ENCODE measurements at regions of chr16 and their contacts with region 1.

Region 1: DNA sequence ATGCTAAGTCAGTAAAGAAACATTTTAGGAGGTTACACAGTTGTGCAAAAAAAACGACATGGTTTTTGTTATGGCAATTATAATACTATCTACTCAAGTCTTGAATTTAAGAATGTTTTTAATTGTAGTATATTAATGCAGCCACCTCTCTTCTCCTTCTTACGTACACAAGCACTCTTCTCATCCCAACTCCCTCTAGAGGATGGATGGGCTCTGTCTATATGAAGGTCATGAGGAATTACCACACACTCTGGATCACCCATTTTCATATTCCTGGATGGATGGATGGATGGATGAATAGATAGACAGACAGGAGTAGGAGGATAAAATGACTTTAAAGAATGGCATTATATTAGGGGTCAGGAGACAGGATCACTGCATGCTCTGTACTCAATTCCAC is 120.0 kb downstream of the PHKB start:
- DNase-seq: peak in 1 of 2 experiments; percentile 26
- ATAC-seq: peak; percentile 59 to 72; a peak in 3 of 6 replicates
- H3K4me3 ChIP-seq: no peak overlapping the region
- H3K27ac ChIP-seq: no peak overlapping the region
- H3K4me1 ChIP-seq: no peaks in the 10 kb centered on the region
- CTCF ChIP-seq: no peak
- EP300 ChIP-seq: no peak
- POLR2A ChIP-seq: no peak
- RAD21 ChIP-seq: no peak

Region 2: DNA sequence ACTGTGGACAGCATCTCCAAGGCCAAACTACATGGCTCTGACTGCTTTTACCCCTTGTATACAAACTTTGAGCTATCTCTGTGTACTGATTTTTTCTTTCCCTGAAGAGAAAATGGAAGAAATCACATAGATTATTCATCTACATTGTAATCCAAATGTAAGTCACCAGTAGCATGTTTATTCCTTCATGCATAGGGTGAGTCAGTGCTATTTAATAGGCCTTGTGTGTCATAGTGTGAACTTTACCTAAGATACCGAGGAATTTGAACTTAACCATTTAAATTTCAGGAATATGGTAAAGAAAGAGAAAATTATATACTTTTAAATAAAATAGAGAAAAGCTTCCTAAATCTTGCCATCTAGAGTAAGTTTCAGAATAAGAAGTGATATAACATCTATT is 103.4 kb before region 1 on chr16:
- CTCF ChIA-PET with region 1: no interaction called
- POLR2A ChIA-PET with region 1: no interaction called
- DNase-seq: no peak
- ATAC-seq: no peak
- H3K4me3 ChIP-seq: no peak overlapping the region
- H3K27ac ChIP-seq: no peak overlapping the region
- H3K4me1 ChIP-seq: 0 out of 3 replicates have a peak, but pooled peaks cover 10% of the 10 kb centered on the region
- CTCF ChIP-seq: no peak
- EP300 ChIP-seq: no peak
- POLR2A ChIP-seq: no peak
- RAD21 ChIP-seq: no peak

Region 3: DNA sequence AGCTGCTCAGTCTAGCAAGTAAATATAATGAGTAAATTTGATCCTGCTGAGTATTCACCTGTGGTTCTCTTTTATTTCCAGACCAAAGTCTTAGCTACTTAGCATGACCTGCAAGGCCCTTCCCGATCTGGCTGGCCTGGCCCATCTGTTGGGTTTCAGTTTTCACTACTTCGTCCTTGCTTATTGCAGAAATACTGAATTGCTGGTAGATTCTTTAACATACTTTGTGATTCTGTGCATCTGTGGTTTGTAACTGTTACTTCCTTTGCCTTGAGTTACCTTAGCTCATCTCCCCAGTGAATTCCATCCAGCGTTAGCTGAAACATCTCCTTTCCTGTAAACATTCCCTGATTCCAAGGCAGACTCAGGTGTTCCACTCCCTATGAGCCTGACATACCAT is 11.1 kb after region 1 on chr16:
- CTCF ChIA-PET with region 1: interaction called, 11 read pairs
- POLR2A ChIA-PET with region 1: no interaction called
- DNase-seq: no peak
- ATAC-seq: no peak
- H3K4me3 ChIP-seq: no peak overlapping the region
- H3K27ac ChIP-seq: no peak overlapping the region
- H3K4me1 ChIP-seq: no peaks in the 10 kb centered on the region
- CTCF ChIP-seq: no peak
- EP300 ChIP-seq: no peak
- POLR2A ChIP-seq: no peak
- RAD21 ChIP-seq: no peak

Measured in A549 (cell line).